Right ventricle myocardium inferior (tissue), 1 donor: ENCODE measurements at regions of chr9 and their contacts with region 1.

Region 1: GRCh38 chr9:99221621-99222415 is at the starts of genes ALG2 and SEC61B:
- DNase-seq: peak; percentile 97
- ATAC-seq: peak; percentile 99
- total RNA-seq, gene ALG2: 13.7 TPM
- total RNA-seq, gene SEC61B: 49.6 TPM

Region 2: GRCh38 chr9:99259231-99259918 is 37.6 kb after region 1 on chr9:
- intact Hi-C with region 1: loop called (anchors 2 kb)
- DNase-seq: peak; percentile 91
- ATAC-seq: peak; percentile 95

Region 3: DNA sequence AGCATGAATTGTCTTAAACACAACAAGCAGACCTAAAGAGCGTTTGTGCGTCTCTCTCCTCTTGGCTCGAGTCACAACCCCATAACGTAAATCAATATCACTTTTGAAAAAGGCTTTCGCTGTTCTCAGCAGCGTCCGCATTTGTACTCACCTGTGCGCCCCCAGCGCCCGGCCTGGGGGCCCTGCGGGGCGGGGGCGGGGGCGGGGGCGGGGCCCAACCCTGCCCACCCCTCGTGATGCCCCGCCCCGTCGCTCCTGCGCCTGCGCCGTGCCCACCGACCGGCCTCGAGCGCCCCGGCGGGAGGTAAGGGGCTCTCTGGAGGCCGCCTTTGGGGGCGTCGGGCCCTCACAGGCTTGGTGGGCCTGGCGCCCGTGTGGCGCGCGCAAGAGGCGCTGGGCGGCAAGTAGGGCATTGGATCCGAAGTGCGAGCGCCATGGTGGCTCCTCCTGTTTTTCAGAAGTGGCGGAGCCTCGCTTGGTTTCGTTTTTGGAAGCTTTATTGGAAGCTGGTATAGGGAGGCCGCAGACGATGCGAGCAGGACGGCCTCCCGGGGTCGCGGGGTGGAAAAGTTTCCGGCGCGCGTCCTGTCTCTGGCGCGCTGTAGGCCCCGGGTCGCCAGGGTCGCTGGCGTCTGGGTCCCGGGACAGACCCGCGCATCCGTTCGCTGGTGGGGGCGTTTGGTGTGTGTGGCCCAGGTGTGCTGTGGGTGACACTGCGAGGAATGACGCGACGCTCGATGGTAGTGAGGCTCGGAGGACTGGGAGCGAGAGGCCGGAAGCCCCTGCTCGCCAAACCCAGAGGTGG is 684.8 kb after region 1 on chr9 and contains the start of gene STX17:
- intact Hi-C with region 1: loop called (anchors 10 kb)
- DNase-seq: peak; percentile 87
- ATAC-seq: peak; percentile 96
- total RNA-seq, gene STX17: 25.0 TPM